H1 (cell line): ENCODE measurements at regions of chr16 and their contacts with region 1.

Region 1: DNA sequence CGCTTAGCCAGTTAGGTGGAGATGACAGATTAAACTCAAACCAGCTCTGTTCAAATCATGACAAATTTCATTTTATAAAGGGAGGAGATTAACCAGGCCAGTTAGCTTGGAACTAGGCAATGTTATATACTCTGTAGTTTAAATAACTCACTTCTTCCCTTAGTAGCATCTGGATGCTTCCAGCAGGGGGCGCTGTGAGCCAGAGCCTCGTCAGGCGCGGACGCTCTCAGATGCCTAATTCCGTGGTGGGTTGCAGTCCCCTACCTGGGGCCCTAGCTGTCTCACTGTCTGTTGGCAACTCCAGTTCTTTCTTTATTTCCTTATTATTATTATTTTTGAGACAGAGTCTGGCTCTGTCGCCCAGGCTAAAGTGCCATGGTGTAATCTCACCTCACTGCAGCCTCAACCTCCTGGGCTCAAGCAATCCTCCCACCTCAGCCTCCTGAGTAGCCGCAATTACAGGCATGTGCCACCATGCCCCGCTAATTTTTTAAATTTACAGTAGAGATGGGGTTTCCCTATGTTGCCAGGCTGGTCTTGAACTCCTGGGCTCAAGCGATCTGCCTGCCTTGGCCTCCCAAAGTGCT is 17.3 kb upstream of the WFDC1 start:
- DNase-seq: peak in 1 of 2 experiments; percentile 90
- H3K4me3 ChIP-seq: no peak overlapping the region
- H3K27ac ChIP-seq: no peak overlapping the region
- H3K4me1 ChIP-seq: peaks cover 3 to 7% (median 5%) of the 10 kb centered on the region in 4 experiments
- H3K27me3 ChIP-seq: no peaks in the 10 kb centered on the region; a peak in 2 of 7 replicates
- CTCF ChIP-seq: peak; percentile 80 to 89 (median 82)
- EP300 ChIP-seq: no peak
- POLR2A ChIP-seq: no peak
- RAD21 ChIP-seq: peak; percentile 90 to 95

Region 2: GRCh38 chr16:84239141-84239769 is 38.1 kb before region 1 on chr16:
- CTCF ChIA-PET with region 1: interaction called, 16 read pairs
- POLR2A ChIA-PET with region 1: no interaction called
- DNase-seq: no peak
- H3K4me3 ChIP-seq: no peak overlapping the region
- H3K27ac ChIP-seq: no peak overlapping the region
- H3K4me1 ChIP-seq: no peaks in the 10 kb centered on the region; a peak in 1 of 7 replicates
- H3K27me3 ChIP-seq: no peaks in the 10 kb centered on the region; a peak in 1 of 7 replicates
- CTCF ChIP-seq: no peak
- EP300 ChIP-seq: no peak
- POLR2A ChIP-seq: no peak
- RAD21 ChIP-seq: peak; percentile 23 to 38; a peak in 3 of 4 replicates

Region 3: DNA sequence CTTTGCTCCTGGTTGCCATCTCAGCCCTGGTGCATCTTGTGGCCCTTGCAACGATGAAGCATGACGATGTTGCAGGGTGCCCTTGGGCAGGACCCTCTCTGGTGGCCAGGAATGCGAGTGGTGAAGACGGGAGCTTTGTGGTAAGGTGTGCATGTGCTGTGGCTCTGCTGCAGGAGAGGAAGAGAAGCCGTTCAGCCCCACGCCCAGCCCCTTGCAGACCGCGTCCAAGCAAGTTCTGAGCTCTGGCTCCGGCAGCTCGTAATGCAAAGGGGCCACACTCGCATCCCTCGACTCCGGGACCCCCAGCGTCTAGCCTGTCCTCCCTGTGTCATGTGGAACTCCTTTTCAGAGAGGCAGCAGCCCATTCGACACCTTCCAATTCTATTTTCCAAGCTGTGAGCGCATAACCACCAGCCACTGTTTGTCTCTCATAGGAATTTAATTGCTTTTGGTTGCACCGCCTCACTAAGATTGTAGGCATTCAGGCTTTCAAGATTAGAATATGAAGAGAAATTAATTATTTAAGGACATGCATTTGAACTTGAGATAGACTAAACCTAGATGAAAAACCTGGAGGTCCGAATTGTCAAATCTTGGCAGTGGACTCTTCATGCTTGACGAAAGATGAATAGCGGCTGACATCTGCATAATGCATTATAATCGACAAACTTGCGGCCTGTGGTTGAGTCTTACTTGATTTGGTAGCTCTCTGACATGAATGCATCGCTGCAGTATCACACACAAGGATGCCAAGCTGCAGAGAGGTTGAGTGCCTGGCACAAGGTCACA is 16.4 kb before region 1 on chr16:
- CTCF ChIA-PET with region 1: interaction called, 26 read pairs
- POLR2A ChIA-PET with region 1: no interaction called
- DNase-seq: no peak
- H3K4me3 ChIP-seq: no peak overlapping the region
- H3K27ac ChIP-seq: no peak overlapping the region
- H3K4me1 ChIP-seq: no peaks in the 10 kb centered on the region
- H3K27me3 ChIP-seq: no peaks in the 10 kb centered on the region
- CTCF ChIP-seq: no peak
- EP300 ChIP-seq: no peak
- POLR2A ChIP-seq: no peak
- RAD21 ChIP-seq: no peak

Region 4: GRCh38 chr16:84294531-84295142 is 17.3 kb after region 1 on chr16 and contains the start of gene WFDC1:
- CTCF ChIA-PET with region 1: interaction called, 40 read pairs
- POLR2A ChIA-PET with region 1: interaction called, 4 read pairs
- DNase-seq: peak in 1 of 2 experiments; percentile 58
- H3K4me3 ChIP-seq: no peak within 1 kb of the TSS
- H3K27ac ChIP-seq: no peak within 1 kb of the TSS
- H3K4me1 ChIP-seq: peaks cover 4 to 29% (median 19%) of the 10 kb centered on the region in 4 experiments
- H3K27me3 ChIP-seq: no peaks in the 10 kb centered on the region; a peak in 1 of 7 replicates
- CTCF ChIP-seq: no peak
- EP300 ChIP-seq: no peak
- POLR2A ChIP-seq: no peak
- RAD21 ChIP-seq: no peak
- total RNA-seq, gene WFDC1: 1.1 and 1.6 TPM in 2 replicates

Region 5: GRCh38 chr16:84308120-84308519 is 30.8 kb after region 1 on chr16:
- CTCF ChIA-PET with region 1: interaction called, 212 read pairs
- POLR2A ChIA-PET with region 1: no interaction called
- DNase-seq: peak in 1 of 2 experiments; percentile 86
- H3K4me3 ChIP-seq: no peak overlapping the region
- H3K27ac ChIP-seq: no peak overlapping the region
- H3K4me1 ChIP-seq: peaks cover 0 to 3% (median 0%) of the 10 kb centered on the region in 4 experiments; a peak in 2 of 7 replicates
- H3K27me3 ChIP-seq: no peaks in the 10 kb centered on the region
- CTCF ChIP-seq: peak; percentile 83 to 92 (median 85)
- EP300 ChIP-seq: no peak
- POLR2A ChIP-seq: no peak
- RAD21 ChIP-seq: peak; percentile 91 to 98

Region 6: DNA sequence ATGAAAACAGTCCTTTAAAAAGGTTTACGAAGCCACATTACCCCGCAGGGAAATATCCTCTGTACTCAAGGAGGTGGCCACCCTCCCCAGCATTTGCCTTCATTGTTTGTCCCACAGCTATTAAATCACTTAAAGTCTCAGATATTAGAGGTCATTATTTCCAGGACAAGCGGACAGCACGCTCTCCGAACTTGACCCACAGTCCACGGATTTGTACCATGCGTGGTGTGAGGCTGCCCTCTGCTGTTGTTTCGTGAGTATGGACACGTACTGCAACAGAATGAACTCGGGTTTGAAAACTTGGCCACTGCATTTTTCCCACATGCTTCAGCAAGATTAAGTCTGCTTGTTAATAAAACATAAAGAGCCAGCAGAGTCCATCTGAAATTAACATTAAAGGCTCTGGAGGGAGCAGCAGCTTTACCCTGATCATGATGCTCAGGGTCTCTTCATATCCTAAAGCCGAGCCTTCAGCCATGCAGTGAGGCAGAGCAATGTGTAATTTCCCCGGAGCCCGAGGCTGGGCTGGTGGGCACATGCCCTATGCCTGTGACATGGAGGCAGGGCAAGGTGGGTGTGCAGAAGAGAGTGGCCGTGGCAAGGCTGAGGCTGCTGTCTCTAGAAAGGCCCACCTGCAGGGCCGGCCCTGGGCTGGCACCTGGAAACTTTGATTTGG is 207.4 kb after region 1 on chr16:
- CTCF ChIA-PET with region 1: interaction called, 66 read pairs
- POLR2A ChIA-PET with region 1: no interaction called
- DNase-seq: peak in 1 of 2 experiments; percentile 73
- H3K4me3 ChIP-seq: no peak overlapping the region
- H3K27ac ChIP-seq: no peak overlapping the region
- H3K4me1 ChIP-seq: no peaks in the 10 kb centered on the region
- H3K27me3 ChIP-seq: no peaks in the 10 kb centered on the region
- CTCF ChIP-seq: peak; percentile 88 to 89 (median 88)
- EP300 ChIP-seq: no peak
- POLR2A ChIP-seq: no peak
- RAD21 ChIP-seq: peak; percentile 99